ENCODE measurements at regions of chr5 and their contacts with region 1.

Region 1: DNA sequence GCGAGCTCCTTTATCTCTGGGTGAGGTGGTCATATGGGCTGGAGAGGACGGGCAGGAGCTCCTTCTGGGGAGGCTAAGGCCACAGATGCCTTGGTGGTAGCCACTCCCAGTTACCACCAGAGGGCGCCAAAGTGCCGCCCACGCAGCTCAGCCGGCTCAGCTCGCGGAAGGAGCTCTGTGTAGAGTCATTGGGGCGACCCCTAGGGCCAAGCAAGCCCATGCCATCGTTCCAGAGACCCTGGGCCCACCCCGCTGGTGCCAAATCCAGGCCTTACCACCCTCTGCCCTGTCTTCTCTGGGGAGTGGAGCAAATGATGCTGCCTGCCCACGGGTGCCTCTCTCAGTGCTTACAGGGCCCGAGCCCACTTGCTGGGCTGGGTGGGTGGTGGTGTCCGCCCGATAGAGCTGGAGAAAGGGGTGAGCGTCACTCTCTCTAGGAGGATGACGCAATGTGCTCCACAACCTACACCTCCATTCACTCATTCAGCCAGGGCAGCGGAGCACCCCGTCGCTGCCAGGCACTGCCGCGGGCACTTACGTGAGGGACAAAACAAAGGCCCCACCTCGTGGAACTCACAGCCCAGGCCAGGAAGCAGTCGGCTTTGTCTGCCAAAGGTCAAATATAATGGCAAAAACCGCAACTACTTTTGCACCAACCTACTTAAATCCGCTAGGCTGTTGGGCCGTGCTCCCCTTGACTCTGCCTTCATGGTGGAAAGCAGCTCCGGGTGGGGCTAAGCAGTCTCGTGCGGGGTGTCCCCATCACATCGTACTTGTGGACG is 13.8 kb downstream of the TSPAN17 start:
- DNase-seq: peak; percentile 96

Region 2: DNA sequence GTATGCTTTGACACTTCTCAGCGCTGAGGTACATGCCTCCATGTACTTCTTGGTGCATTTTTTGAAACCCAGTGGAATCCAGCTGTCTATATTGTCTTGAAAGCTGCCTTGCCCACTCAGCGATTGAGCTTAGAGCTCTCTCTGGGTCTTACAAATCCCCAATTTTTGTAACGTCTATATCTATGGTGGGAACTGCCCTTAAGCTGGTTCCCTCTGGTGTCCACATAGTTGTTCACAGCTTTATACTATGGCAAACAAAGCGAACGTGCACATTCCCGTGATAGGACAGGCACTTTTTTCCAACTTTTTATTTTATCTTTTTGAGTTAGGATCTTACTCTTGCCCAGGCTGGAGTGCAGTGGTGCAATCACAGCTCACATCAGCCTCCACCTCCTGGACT is 91.0 kb before region 1 on chr5:
- CTCF ChIA-PET with region 1: interaction called, 12 read pairs
- POLR2A ChIA-PET with region 1: no interaction called
- DNase-seq: no peak

Region 3: DNA sequence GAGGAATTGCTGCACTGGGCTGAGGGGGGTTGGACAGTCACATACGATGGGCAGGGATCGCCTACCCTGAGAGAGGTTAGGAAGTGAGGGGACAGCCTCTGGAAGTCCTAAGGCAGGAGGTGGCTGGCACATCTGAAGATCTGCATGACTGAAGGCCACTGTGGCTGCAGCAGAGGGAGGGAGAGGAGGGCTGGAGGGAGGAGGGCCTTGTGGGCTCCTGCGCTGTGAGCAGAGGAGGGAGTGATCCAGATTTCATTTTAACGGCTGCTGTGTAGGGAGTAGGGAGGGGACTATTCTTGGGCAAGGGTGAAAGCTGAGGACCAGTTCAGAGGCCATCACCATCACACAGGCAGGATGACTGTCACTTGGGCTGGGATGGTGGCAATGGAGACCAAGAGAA is 23.5 kb before region 1 on chr5:
- CTCF ChIA-PET with region 1: no interaction called
- POLR2A ChIA-PET with region 1: no interaction called
- DNase-seq: no peak

Region 4: DNA sequence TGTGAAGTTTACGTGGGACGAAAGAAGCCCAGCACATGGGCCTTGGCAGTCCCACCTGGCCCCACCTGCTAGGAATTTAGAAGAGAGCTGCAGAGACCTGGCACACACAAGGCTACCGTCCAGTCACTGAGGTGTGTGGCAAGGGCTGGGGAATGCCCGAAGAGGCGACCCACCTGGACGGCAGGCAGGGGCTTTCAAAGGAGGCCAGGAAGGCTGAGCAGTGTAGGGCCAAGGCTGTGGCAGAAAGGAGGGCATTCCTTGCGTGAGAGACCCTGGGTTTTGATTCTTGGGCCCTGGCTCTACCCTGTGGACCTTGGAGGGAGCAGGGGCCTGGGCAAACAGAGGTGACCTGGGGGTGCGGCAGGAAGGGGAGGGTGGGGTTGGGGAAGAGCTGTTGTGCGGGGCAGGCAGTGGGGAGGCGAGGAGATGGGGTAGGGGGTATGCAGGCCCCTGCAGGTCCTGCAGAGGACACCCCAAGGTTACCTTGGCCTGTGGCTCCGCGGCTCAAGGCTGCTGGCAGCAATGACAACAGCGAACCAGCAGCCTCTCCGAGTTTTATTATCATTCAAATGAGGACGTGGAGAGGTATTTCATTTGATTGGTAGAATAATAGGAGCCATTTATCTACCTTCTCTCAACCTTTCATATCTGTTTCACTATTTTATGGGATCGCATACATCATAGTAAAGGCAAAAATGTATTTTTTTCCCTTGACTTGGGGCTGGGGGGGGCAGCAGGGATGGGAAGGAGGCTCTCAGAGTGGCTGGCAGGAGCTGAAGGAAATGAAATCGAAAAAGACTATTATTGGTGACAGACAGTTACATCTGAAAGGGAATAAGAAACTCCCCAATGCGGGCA is 11.1 kb after region 1 on chr5:
- CTCF ChIA-PET with region 1: interaction called, 28 read pairs
- POLR2A ChIA-PET with region 1: interaction called, 4 read pairs
- DNase-seq: no peak

Region 5: DNA sequence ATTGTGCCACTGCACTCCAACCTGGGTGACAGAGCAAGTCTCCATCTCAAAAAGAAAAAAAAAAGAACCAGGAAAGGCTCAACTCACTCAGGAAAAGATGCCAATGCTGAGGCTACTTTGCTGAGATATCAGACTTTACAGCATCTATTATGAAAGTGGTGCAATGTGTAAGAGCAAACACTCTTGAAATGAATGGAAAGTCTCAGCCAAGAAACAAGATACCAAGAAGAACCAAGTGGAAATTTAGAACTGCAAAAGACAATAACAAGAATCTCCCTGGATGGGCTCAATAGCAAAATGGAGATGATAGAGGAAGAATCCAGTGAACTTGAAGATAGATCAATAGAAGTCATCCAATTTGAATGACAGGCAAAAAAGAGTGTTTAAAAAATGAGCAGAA is 24.0 kb after region 1 on chr5:
- CTCF ChIA-PET with region 1: interaction called, 12 read pairs
- POLR2A ChIA-PET with region 1: no interaction called
- DNase-seq: no peak

Region 6: DNA sequence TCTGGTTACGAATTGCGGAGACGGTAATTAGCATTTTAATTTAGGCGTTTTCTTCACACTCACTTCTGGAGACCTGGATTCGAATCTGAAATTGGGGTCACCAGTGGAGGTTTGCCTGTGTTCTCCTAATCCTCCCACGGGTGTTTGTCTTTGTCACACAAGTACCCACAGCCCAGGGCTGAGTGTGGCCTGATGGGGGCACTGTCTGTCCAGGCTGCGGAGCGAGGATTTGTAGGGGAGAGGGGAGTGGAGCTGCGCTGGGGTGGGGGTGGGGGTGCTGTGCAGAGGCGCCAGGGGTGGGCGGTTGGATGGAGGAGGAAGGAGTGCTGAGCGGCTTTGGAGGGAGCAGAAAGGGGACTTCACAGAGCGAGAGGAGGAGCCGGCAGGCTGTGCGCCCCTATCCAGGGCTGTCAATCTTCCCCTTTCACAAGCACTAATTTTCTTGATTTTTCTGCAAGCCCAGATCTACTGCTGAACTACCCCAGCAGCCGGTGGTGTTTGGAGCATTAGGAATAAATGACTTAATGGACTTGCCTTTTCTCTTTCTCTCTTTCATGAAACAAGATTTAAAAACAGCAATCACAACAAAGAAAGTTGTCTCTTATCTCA is 39.3 kb after region 1 on chr5:
- CTCF ChIA-PET with region 1: interaction called, 27 read pairs
- POLR2A ChIA-PET with region 1: no interaction called
- DNase-seq: peak; percentile 53

Region 7: DNA sequence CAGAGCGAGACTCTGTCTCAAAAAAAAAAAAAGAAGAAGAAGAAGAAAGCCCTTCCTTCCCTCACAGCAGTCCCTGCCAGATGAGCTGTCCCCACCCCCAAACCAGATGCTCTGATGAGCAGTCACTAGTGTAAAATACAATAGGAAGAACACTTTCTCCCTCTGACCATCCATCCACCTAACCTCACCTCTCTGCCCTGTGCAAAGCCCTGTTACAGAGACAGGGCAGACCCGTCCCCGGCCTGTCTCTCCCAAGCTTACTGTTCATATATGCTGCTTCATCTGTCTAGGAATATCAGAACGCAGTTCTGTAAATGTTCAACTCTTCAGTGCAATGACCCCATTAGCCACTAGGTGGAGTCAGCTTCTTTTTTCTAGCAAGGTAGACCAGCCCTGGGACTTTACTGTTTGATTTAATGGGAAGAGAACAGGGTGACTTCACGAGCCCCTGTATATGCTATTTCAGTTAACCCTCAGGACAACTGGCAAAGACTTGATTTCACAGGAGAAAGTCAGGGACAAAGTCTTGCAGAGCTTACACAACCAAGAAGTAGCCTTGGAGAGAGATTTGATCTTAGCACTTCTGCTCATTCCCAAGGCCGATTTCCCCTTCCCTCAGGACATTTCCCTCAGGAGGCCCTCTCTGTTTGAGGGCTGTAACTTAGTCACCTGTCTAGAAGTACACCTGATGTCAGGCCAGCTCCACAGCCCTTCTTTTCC is 410.8 kb after region 1 on chr5:
- CTCF ChIA-PET with region 1: interaction called, 13 read pairs
- POLR2A ChIA-PET with region 1: no interaction called
- DNase-seq: peak; percentile 79

Region 8: GRCh38 chr5:177189416-177189815 is 528.4 kb after region 1 on chr5:
- CTCF ChIA-PET with region 1: no interaction called
- POLR2A ChIA-PET with region 1: no interaction called
- DNase-seq: no peak

Measured in HEK293T (cell line).